ENCODE measurements at regions of chr2 and their contacts with region 1.

Region 1: DNA sequence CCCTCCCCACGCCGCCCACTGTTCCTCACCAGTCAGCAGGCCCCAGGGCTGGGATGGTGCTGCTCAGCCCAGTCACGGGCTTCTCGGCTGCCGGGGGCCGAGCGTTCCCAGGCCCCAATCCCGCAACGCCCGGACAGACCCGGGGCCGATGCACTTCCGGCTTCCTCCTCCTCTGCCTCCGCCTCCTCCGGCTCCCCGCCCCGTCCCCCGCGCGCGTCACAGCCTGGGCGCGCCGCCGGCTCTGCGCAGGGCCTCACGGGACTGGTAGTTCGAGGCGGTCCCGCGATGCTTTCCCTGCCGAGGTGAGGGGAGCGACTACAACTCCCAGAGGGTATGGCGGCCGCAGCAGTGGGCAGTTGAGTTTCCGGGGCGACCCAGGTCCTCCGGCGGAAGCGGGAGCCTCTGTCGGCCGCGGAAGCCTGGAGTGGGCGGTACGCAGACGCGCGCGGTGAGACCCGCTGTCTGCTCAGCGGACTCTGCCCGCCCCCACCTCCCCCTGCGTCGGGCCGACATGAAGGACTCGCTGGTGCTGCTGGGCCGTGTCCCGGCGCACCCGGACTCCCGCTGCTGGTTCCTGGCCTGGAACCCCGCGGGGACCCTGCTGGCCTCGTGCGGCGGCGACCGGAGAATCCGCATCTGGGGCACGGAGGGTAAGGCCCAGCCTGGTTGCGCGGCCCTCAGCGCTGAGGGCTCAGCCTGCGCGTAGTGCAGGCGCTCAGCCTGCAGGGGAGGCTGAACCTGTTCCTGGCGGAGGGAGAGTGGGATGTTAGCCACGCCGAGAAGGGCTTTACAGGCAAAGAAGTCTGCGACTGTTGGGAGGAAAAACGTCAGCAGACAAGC is at the starts of genes CIAO1 and TMEM127:
- DNase-seq: peak; percentile 97 to 98 (median 97)
- H3K4me3 ChIP-seq: peak within 1 kb of the TSS; percentile 85 to 97
- H3K4me3 Mint-ChIP-seq: peak within 1 kb of the TSS; percentile 91 to 99 (median 94)
- H3K27ac ChIP-seq: peak within 1 kb of the TSS; percentile 94
- H3K27ac Mint-ChIP-seq: peak within 1 kb of the TSS; percentile 80 to 99 (median 94)
- H3K4me1 ChIP-seq: peaks cover 49% of the 10 kb centered on the region
- H3K4me1 Mint-ChIP-seq: peaks cover 22 to 64% (median 48%) of the 10 kb centered on the region in 4 donors
- H3K27me3 ChIP-seq: no peaks in the 10 kb centered on the region
- H3K27me3 Mint-ChIP-seq: no peaks in the 10 kb centered on the region
- total RNA-seq, gene CIAO1: 78.3 to 87.3 TPM
- total RNA-seq, gene TMEM127: 45.1 to 45.6 TPM

Region 2: DNA sequence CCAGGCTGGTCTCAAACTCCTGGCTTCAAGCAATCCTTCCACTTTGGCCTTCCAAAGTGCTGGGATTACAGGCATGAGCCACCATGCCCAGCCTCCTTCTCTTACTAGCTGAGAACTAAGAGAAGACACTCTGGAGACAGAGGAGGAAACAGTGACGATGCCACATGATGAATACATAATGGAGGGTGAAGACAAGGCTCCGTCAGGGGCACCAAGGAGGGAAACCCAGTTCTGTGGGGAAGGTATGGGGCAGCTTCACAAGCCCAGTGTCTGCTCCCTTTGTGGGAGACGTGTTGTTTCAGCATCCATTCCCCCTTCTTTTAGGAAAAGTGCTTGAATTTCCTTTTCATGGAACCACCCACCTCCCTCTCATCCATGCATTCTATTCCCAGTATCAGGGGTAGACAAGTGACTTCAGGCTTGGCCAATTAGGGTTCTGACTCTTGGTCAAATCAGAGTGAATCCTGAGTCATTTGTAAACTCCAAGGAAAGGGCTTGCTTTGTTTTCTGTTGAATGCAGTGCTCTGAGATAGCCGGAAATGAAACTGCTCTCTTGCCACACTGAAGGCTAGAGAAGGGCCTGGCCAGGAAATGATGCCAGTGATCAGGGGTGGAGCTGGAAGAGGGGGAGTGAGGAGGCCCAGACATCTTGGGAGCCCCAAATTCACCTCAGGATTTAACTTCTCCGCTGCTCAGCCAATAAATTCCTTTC is 24.0 kb before region 1 on chr2:
- CTCF ChIA-PET with region 1: interaction called, 4 read pairs
- POLR2A ChIA-PET with region 1: interaction called, 6 read pairs
- intact Hi-C with region 1: loop called (anchors 2 kb)
- DNase-seq: peak; percentile 44 to 74 (median 52)
- H3K4me3 ChIP-seq: peak overlapping the region in 1 of 2 donors; percentile 18
- H3K4me3 Mint-ChIP-seq: peak overlapping the region; percentile 58 to 84 (median 74)
- H3K27ac ChIP-seq: peak overlapping the region; percentile 65
- H3K27ac Mint-ChIP-seq: peak overlapping the region; percentile 91 to 98 (median 96)
- H3K4me1 ChIP-seq: peaks cover 42% of the 10 kb centered on the region
- H3K4me1 Mint-ChIP-seq: peaks cover 34 to 60% (median 46%) of the 10 kb centered on the region in 4 donors
- H3K27me3 ChIP-seq: no peaks in the 10 kb centered on the region
- H3K27me3 Mint-ChIP-seq: no peaks in the 10 kb centered on the region

Region 3: GRCh38 chr2:96305091-96305978 is 39.3 kb after region 1 on chr2 and contains the start of gene SNRNP200:
- CTCF ChIA-PET with region 1: no interaction called
- POLR2A ChIA-PET with region 1: interaction called, 25 read pairs
- intact Hi-C with region 1: loop called (anchors 1 kb)
- DNase-seq: peak; percentile 91 to 95 (median 91)
- H3K4me3 ChIP-seq: peak within 1 kb of the TSS; percentile 80 to 99
- H3K4me3 Mint-ChIP-seq: peak within 1 kb of the TSS; percentile 97 to 100 (median 99)
- H3K27ac ChIP-seq: peak within 1 kb of the TSS; percentile 89
- H3K27ac Mint-ChIP-seq: peak within 1 kb of the TSS; percentile 98 to 100 (median 100)
- H3K4me1 ChIP-seq: peaks cover 48% of the 10 kb centered on the region
- H3K4me1 Mint-ChIP-seq: peaks cover 44 to 65% (median 54%) of the 10 kb centered on the region in 4 donors
- H3K27me3 ChIP-seq: no peaks in the 10 kb centered on the region
- H3K27me3 Mint-ChIP-seq: no peaks in the 10 kb centered on the region
- total RNA-seq, gene SNRNP200: 225 to 227 TPM

Measured in CD4-positive, alpha-beta memory T cell (primary cell).